ENCODE measurements at regions of chr7 and their contacts with region 1.

Region 1: GRCh38 chr7:155380221-155380861 is 77.6 kb upstream of the EN2 start:
- DNase-seq: peak; percentile 62
- H3K4me3 ChIP-seq: no peak overlapping the region
- H3K27ac ChIP-seq: no peak overlapping the region
- H3K4me1 ChIP-seq: no peaks in the 10 kb centered on the region
- H3K27me3 ChIP-seq: peaks cover 77 to 85% of the 10 kb centered on the region in 2 experiments
- CTCF ChIP-seq: peak; percentile 66 to 83
- POLR2A ChIP-seq: no peak

Region 2: DNA sequence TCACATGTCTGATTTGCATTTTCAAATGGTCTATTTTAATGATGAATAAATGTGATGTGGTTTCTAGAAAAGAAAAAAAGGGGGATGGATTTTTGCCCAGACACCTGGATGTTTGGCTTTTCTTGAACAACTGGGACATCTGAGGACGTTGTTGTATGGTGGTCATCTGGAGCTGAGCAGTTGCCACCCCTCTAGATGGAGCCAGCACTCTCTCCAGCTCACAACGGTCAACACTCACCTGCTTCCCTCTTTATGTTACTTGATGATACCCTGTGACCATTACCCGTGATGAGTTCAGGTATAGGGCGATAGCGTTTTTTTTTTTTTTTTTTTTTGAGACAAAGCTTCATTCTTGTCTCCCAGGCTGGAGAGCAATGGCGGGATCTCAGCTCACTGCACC is 347.4 kb before region 1 on chr7:
- CTCF ChIA-PET with region 1: no interaction called
- POLR2A ChIA-PET with region 1: no interaction called
- dilution Hi-C with region 1: no loop called
- intact Hi-C with region 1: no loop called
- DNase-seq: no peak
- H3K4me3 ChIP-seq: no peak overlapping the region
- H3K27ac ChIP-seq: no peak overlapping the region
- H3K4me1 ChIP-seq: no peaks in the 10 kb centered on the region
- H3K27me3 ChIP-seq: no peaks in the 10 kb centered on the region
- CTCF ChIP-seq: no peak
- POLR2A ChIP-seq: no peak

Region 3: DNA sequence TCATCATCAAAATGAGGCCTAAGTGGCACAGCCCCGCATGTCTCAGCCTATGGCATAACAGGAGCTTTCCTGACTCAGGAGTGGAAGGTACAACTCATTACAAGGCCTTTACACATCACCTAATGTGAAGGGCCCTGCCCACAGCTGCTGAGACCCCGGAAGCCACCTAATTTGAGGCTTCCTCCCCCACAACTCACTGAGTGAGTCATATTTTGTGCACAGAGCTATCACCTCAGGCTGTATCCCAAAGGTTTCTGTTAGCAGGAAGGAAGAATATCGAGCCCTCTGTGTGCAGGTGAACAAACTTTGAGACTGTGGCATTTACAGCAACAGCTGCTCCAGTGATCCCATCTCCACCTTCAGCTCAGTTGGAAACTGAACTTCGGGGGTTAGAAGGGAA is 289.7 kb before region 1 on chr7:
- CTCF ChIA-PET with region 1: no interaction called
- POLR2A ChIA-PET with region 1: no interaction called
- dilution Hi-C with region 1: no loop called
- intact Hi-C with region 1: no loop called
- DNase-seq: no peak
- H3K4me3 ChIP-seq: no peak overlapping the region
- H3K27ac ChIP-seq: no peak overlapping the region
- H3K4me1 ChIP-seq: no peaks in the 10 kb centered on the region
- H3K27me3 ChIP-seq: no peaks in the 10 kb centered on the region
- CTCF ChIP-seq: no peak
- POLR2A ChIP-seq: no peak

Region 4: GRCh38 chr7:155356323-155357105 is 23.8 kb before region 1 on chr7:
- CTCF ChIA-PET with region 1: interaction called, 14 read pairs
- POLR2A ChIA-PET with region 1: no interaction called
- dilution Hi-C with region 1: no loop called
- intact Hi-C with region 1: no loop called
- DNase-seq: peak; percentile 30
- H3K4me3 ChIP-seq: no peak overlapping the region
- H3K27ac ChIP-seq: no peak overlapping the region
- H3K4me1 ChIP-seq: no peaks in the 10 kb centered on the region
- H3K27me3 ChIP-seq: peaks cover 0 to 3% of the 10 kb centered on the region in 2 experiments
- CTCF ChIP-seq: peak; percentile 43 to 44
- POLR2A ChIP-seq: no peak

Region 5: GRCh38 chr7:155392726-155393570 is 12.6 kb after region 1 on chr7:
- CTCF ChIA-PET with region 1: interaction called, 26 read pairs
- POLR2A ChIA-PET with region 1: no interaction called
- dilution Hi-C with region 1: no loop called
- intact Hi-C with region 1: no loop called
- DNase-seq: no peak
- H3K4me3 ChIP-seq: no peak overlapping the region
- H3K27ac ChIP-seq: no peak overlapping the region
- H3K4me1 ChIP-seq: no peaks in the 10 kb centered on the region
- H3K27me3 ChIP-seq: no peaks in the 10 kb centered on the region
- CTCF ChIP-seq: no peak
- POLR2A ChIP-seq: no peak

Region 6: GRCh38 chr7:155456738-155457564 is 76.6 kb after region 1 on chr7:
- CTCF ChIA-PET with region 1: interaction called, 3 read pairs
- POLR2A ChIA-PET with region 1: no interaction called
- dilution Hi-C with region 1: no loop called
- intact Hi-C with region 1: loop called (anchors 5 kb)
- DNase-seq: peak; percentile 49
- H3K4me3 ChIP-seq: peak overlapping the region in 2 of 3 experiments; percentile 27 to 34
- H3K27ac ChIP-seq: no peak overlapping the region
- H3K4me1 ChIP-seq: no peaks in the 10 kb centered on the region
- H3K27me3 ChIP-seq: peaks cover 78 to 94% of the 10 kb centered on the region in 2 experiments
- CTCF ChIP-seq: no peak
- POLR2A ChIP-seq: no peak

Region 7: DNA sequence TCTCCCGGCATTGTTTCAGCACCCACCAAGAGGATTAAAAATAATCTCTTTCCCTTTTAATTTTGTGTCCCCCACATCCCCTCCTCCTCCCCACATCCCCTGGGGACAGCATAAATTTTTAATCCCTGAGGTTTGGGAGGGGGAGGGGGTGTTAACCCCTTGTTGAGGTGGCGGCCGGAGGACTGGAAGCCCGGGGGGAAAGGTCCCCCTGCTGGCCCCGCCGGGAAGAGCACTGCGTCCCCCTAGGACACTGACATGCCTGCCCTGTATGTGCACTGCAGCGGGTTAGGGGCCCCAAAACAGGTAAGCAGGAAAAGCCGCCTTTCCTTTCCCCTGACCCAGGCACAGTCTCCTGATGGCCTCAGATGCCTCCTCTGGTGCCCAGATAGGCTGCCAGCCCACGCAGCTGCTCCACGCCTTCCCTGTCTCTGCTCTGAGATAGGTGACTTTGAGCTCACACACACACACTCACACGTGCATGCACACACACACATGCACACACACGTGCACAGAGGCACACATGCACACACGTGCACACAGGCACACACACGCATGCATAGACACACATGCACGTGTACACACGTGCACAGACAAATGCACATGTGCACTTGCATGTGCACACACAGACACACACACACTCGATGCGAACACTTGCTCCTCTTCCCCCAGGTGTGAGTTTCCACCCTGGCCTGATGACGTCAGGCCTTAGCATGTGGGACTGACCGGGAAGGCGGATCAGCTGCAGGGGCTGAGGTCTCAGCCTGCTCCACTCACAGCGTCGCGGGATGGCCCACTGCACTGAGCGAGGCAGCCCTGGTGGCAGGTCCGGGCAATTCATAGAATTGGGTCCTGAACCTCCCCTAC is 153.7 kb after region 1 on chr7:
- CTCF ChIA-PET with region 1: interaction called, 17 read pairs
- POLR2A ChIA-PET with region 1: no interaction called
- dilution Hi-C with region 1: no loop called
- intact Hi-C with region 1: loop called (anchors 2 kb)
- DNase-seq: peak; percentile 20
- H3K4me3 ChIP-seq: no peak overlapping the region
- H3K27ac ChIP-seq: no peak overlapping the region
- H3K4me1 ChIP-seq: no peaks in the 10 kb centered on the region
- H3K27me3 ChIP-seq: peaks cover 28 to 31% of the 10 kb centered on the region in 2 experiments
- CTCF ChIP-seq: peak; percentile 41 to 80
- POLR2A ChIP-seq: no peak

Region 8: GRCh38 chr7:155555116-155555695 is 174.9 kb after region 1 on chr7:
- CTCF ChIA-PET with region 1: no interaction called
- POLR2A ChIA-PET with region 1: no interaction called
- dilution Hi-C with region 1: no loop called
- intact Hi-C with region 1: no loop called
- DNase-seq: no peak
- H3K4me3 ChIP-seq: no peak overlapping the region
- H3K27ac ChIP-seq: no peak overlapping the region
- H3K4me1 ChIP-seq: no peaks in the 10 kb centered on the region
- H3K27me3 ChIP-seq: no peaks in the 10 kb centered on the region
- CTCF ChIP-seq: no peak
- POLR2A ChIP-seq: no peak

Region 9: GRCh38 chr7:155763691-155764437 is 383.5 kb after region 1 on chr7:
- CTCF ChIA-PET with region 1: interaction called, 13 read pairs
- POLR2A ChIA-PET with region 1: no interaction called
- dilution Hi-C with region 1: no loop called
- intact Hi-C with region 1: loop called (anchors 1 kb)
- DNase-seq: peak; percentile 88
- H3K4me3 ChIP-seq: no peak overlapping the region
- H3K27ac ChIP-seq: peak overlapping the region; percentile 69
- H3K4me1 ChIP-seq: peaks cover 16% of the 10 kb centered on the region
- H3K27me3 ChIP-seq: no peaks in the 10 kb centered on the region
- CTCF ChIP-seq: no peak
- POLR2A ChIP-seq: no peak

Region 10: DNA sequence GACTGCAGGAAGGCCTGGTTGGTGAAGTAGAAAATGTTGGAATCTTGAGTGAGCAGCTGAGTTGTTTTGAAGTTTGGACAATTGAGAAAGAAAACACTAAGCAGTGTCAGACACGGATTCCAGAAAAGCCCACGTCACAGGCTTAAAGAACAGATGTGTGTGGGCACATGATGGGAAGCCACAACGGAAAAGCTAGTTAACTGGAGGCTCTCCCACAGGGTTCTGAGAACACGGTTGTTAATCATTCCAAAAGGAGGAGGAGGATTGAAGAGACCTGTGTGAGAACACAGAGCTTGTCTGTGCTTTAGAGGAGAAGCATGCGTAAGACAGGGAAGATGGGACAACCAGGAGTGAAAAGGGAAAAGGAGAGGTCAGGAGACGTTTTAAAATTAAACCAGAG is 389.4 kb after region 1 on chr7:
- CTCF ChIA-PET with region 1: interaction called, 13 read pairs
- POLR2A ChIA-PET with region 1: no interaction called
- dilution Hi-C with region 1: no loop called
- intact Hi-C with region 1: loop called (anchors 1 kb)
- DNase-seq: no peak
- H3K4me3 ChIP-seq: no peak overlapping the region
- H3K27ac ChIP-seq: no peak overlapping the region
- H3K4me1 ChIP-seq: peaks cover under 1% of the 10 kb centered on the region
- H3K27me3 ChIP-seq: no peaks in the 10 kb centered on the region
- CTCF ChIP-seq: no peak
- POLR2A ChIP-seq: no peak